Naive thymus-derived CD4-positive, alpha-beta T cell (primary cell): ENCODE measurements at regions of chr9 and their contacts with region 1.

Region 1: GRCh38 chr9:84759300-84759750 is 89.8 kb downstream of the NTRK2 start:
- DNase-seq: peak in 1 of 9 donors; percentile 51
- ATAC-seq: no peak
- H3K4me3 ChIP-seq: no peak overlapping the region
- H3K4me3 Mint-ChIP-seq: peak overlapping the region in 1 of 10 donors; percentile 75
- H3K27ac ChIP-seq: no peak overlapping the region
- H3K27ac Mint-ChIP-seq: peak overlapping the region in 1 of 9 donors; percentile 87
- H3K4me1 ChIP-seq: no peaks in the 10 kb centered on the region
- H3K4me1 Mint-ChIP-seq: peaks cover 0 to 43% (median 0%) of the 10 kb centered on the region in 7 donors
- H3K27me3 ChIP-seq: no peaks in the 10 kb centered on the region
- H3K27me3 Mint-ChIP-seq: peaks cover 0 to 24% (median 16%) of the 10 kb centered on the region in 5 donors

Region 2: DNA sequence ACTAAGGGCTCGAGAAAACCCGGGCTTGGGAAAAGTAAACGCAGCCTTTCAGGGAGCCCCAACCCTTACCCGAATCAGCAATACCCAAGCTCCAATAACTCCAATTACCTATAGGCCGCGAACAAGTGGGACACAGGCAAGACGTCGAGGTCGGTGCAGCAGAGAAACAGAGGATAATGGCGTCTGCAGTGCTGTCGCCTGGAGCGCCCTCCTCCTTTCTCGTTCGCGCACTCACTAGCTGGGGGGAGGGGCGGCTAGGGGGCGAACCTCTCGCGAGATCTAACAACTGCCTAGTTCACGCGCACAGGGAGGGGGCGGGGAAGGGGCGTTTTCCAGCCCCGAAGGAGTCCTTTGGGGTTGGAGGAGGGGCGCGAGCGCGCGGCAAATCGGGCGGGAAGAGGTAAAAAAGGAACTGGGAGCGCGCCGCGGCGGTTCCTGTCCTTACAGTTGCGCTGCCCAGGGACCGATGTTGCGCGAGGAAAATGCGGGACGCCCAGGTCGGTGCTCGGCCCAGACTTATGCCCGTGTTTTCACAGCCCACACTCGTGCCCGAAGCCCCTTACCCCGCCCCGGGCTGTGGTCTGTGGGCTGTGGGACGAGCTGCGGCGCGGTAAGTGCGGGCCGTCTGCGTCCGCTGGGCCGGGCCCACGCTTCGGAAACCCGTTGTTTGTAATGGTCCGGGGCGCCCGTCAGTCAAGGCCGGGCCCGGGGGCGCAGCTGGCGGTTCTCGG is 778.8 kb before region 1 on chr9 and contains the start of gene RMI1:
- CTCF ChIA-PET with region 1: no interaction called
- POLR2A ChIA-PET with region 1: no interaction called
- intact Hi-C with region 1: no loop called
- DNase-seq: peak; percentile 95 to 99 (median 98)
- ATAC-seq: peak; percentile 88
- H3K4me3 ChIP-seq: peak within 1 kb of the TSS; percentile 93
- H3K4me3 Mint-ChIP-seq: peak within 1 kb of the TSS; percentile 91 to 100 (median 99)
- H3K27ac ChIP-seq: peak within 1 kb of the TSS; percentile 99
- H3K27ac Mint-ChIP-seq: peak within 1 kb of the TSS; percentile 97 to 100 (median 99)
- H3K4me1 ChIP-seq: peaks cover 21 to 27% of the 10 kb centered on the region in 2 donors
- H3K4me1 Mint-ChIP-seq: peaks cover 28 to 52% (median 46%) of the 10 kb centered on the region in 7 donors
- H3K27me3 ChIP-seq: no peaks in the 10 kb centered on the region
- H3K27me3 Mint-ChIP-seq: no peaks in the 10 kb centered on the region
- total RNA-seq, gene RMI1: 1.6 to 24.8 (median 5.2) TPM

Region 3: DNA sequence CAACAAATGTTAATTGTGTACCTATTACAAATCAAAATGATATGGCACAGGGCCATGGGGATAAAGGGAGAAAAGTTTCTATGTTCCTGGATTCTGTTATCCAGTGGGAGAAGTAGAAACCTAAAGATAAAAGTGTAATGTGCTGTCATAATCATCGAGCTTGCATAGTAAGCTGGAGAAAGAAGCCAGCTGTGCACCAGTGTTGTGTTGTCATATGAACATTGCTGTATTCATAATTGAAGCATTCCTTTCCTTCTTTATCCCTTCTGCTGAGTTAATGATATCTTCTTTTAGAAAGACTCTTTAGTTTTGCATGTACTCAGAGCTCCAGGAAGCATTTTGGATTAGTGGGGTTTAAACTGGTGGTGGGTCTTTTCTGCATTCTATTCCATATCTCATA is 50.3 kb before region 1 on chr9:
- CTCF ChIA-PET with region 1: no interaction called
- POLR2A ChIA-PET with region 1: no interaction called
- intact Hi-C with region 1: loop called in 1 of 2 experiments (anchors 1 kb)
- DNase-seq: no peak
- ATAC-seq: no peak
- H3K4me3 ChIP-seq: no peak overlapping the region
- H3K4me3 Mint-ChIP-seq: no peak overlapping the region
- H3K27ac ChIP-seq: no peak overlapping the region
- H3K27ac Mint-ChIP-seq: no peak overlapping the region
- H3K4me1 ChIP-seq: no peaks in the 10 kb centered on the region
- H3K4me1 Mint-ChIP-seq: peaks cover 0 to 15% (median 0%) of the 10 kb centered on the region in 7 donors
- H3K27me3 ChIP-seq: no peaks in the 10 kb centered on the region
- H3K27me3 Mint-ChIP-seq: peaks cover 9 to 28% (median 17%) of the 10 kb centered on the region in 5 donors

Region 4: GRCh38 chr9:84722388-84722989 is 36.8 kb before region 1 on chr9:
- CTCF ChIA-PET with region 1: no interaction called
- POLR2A ChIA-PET with region 1: no interaction called
- intact Hi-C with region 1: no loop called
- DNase-seq: no peak
- ATAC-seq: no peak
- H3K4me3 ChIP-seq: no peak overlapping the region
- H3K4me3 Mint-ChIP-seq: no peak overlapping the region
- H3K27ac ChIP-seq: no peak overlapping the region
- H3K27ac Mint-ChIP-seq: no peak overlapping the region
- H3K4me1 ChIP-seq: no peaks in the 10 kb centered on the region
- H3K4me1 Mint-ChIP-seq: peaks cover 0 to 2% (median 0%) of the 10 kb centered on the region in 7 donors
- H3K27me3 ChIP-seq: no peaks in the 10 kb centered on the region
- H3K27me3 Mint-ChIP-seq: peaks cover 3 to 19% (median 12%) of the 10 kb centered on the region in 5 donors